Naive thymus-derived CD4-positive, alpha-beta T cell (primary cell): ENCODE measurements at regions of chr13 and their contacts with region 1.

Region 1: DNA sequence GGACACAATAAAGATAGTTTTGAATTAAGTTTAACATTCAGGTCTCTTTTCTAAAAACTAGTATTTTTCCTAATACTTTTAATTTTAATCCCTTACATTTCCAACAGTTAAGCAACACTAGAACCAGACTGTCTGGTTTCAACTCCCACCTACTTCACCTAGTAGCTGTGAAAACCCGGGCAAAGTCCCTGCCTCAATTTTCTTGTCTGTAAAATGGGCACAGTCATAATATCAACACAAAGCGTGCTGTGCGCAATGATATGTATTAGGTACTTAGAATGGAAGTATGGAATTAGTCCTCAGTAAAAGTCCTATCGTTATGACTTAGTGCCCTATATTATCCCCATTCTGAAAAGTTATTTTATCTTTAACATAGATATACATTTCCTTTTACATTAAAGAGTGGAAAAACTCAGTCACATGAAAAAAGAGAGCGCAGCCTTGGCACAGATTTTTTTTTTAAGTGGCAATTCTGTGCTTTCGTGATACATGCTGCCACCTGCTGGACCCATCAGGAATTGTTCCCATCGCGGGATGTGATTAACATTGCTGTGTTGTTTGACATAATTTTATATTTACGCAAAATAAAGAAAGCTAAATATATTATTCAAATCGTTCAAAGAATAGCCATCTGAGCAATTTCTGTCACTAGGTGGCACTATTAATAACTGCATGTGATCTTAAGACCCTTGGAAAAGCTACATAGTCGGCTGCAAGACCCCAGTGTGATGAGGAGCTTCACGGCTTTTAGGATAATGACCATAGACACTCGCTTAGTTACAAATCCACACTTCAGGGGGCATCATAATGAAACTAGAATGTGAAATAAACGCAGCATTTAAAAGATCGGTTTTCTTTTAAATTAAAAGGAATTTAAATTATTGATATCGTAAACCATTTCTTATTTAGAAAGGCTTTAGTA is 59.9 kb downstream of the LIG4 start:
- DNase-seq: peak; percentile 10 to 60 (median 47)
- ATAC-seq: peak; percentile 65
- H3K4me3 ChIP-seq: no peak overlapping the region
- H3K4me3 Mint-ChIP-seq: no peak overlapping the region
- H3K27ac ChIP-seq: no peak overlapping the region
- H3K27ac Mint-ChIP-seq: no peak overlapping the region
- H3K4me1 ChIP-seq: no peaks in the 10 kb centered on the region
- H3K4me1 Mint-ChIP-seq: no peaks in the 10 kb centered on the region
- H3K27me3 ChIP-seq: no peaks in the 10 kb centered on the region
- H3K27me3 Mint-ChIP-seq: peaks cover 0 to 25% (median 16%) of the 10 kb centered on the region in 5 donors

Region 2: GRCh38 chr13:107205303-107206104 is 949.9 kb before region 1 on chr13:
- CTCF ChIA-PET with region 1: interaction called, 4 read pairs
- POLR2A ChIA-PET with region 1: no interaction called
- intact Hi-C with region 1: loop called in 1 of 2 experiments (anchors 1 kb)
- DNase-seq: peak; percentile 9 to 56 (median 39)
- ATAC-seq: peak; percentile 76
- H3K4me3 ChIP-seq: no peak overlapping the region
- H3K4me3 Mint-ChIP-seq: no peak overlapping the region
- H3K27ac ChIP-seq: no peak overlapping the region
- H3K27ac Mint-ChIP-seq: no peak overlapping the region
- H3K4me1 ChIP-seq: no peaks in the 10 kb centered on the region
- H3K4me1 Mint-ChIP-seq: peaks cover 0 to 3% (median 0%) of the 10 kb centered on the region in 7 donors
- H3K27me3 ChIP-seq: no peaks in the 10 kb centered on the region
- H3K27me3 Mint-ChIP-seq: peaks cover 0 to 16% (median 0%) of the 10 kb centered on the region in 5 donors